A673 (cell line): ENCODE measurements at regions of chr11 and their contacts with region 1.

Region 1: GRCh38 chr11:1202776-1203504 is 19.9 kb upstream of the MUC5B start:
- DNase-seq: peak; percentile 63
- H3K4me3 ChIP-seq: no peak overlapping the region
- H3K27ac ChIP-seq: no peak overlapping the region
- H3K4me1 ChIP-seq: no peaks in the 10 kb centered on the region
- H3K27me3 ChIP-seq: peaks cover 4% of the 10 kb centered on the region
- CTCF ChIP-seq: peak; percentile 86

Region 2: DNA sequence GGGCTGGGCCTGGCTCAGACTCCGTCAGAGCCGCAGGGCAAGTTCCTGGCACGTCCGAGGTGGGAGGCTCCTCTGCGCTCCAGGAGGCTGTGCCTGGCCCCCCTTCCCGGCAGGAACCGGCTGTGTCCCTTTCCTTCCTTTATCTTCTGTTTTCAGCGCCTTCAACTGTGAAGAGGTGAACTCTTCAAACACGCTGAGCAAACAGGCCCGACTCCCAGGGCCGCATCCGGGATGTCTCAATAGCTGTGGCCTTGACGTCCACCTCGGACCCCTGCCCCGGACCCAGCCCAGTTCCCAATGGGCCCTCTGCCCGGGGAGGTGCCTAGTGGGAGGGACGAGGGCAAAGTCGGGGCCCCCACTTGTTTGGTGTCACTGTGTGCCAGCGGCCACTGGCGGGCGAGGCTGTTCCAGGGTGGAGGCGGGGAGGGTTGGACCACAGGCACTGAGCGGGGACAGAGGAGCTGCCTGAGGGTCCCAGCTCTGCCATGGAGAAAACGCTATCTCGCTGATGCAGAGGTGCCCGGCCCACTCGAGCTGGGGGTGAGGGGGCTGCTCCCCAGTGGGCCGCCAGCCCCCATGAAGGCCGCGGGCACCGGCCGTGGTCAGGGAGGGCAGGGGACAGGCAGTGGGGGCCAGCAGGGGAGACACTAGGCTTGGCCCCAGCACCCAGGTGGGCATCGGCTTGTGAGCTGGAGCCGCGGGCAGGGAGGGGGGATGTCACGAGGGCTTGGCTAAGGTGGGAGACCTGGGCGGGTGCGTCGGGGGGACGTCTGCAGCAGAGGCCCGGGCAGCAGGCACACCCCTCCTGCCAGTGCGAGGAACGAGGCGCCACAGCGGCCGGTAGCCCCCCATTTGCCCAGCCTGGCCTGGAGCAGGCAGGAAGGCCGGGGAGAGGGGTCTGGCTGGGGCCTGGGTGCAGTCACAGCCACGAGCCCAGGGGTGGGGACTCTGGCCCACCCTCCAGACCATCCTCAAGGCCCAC is 17.2 kb after region 1 on chr11:
- CTCF ChIA-PET with region 1: no interaction called
- POLR2A ChIA-PET with region 1: no interaction called
- intact Hi-C with region 1: no loop called
- DNase-seq: no peak
- H3K4me3 ChIP-seq: no peak overlapping the region
- H3K27ac ChIP-seq: no peak overlapping the region
- H3K4me1 ChIP-seq: no peaks in the 10 kb centered on the region
- H3K27me3 ChIP-seq: no peaks in the 10 kb centered on the region
- CTCF ChIP-seq: no peak

Region 3: DNA sequence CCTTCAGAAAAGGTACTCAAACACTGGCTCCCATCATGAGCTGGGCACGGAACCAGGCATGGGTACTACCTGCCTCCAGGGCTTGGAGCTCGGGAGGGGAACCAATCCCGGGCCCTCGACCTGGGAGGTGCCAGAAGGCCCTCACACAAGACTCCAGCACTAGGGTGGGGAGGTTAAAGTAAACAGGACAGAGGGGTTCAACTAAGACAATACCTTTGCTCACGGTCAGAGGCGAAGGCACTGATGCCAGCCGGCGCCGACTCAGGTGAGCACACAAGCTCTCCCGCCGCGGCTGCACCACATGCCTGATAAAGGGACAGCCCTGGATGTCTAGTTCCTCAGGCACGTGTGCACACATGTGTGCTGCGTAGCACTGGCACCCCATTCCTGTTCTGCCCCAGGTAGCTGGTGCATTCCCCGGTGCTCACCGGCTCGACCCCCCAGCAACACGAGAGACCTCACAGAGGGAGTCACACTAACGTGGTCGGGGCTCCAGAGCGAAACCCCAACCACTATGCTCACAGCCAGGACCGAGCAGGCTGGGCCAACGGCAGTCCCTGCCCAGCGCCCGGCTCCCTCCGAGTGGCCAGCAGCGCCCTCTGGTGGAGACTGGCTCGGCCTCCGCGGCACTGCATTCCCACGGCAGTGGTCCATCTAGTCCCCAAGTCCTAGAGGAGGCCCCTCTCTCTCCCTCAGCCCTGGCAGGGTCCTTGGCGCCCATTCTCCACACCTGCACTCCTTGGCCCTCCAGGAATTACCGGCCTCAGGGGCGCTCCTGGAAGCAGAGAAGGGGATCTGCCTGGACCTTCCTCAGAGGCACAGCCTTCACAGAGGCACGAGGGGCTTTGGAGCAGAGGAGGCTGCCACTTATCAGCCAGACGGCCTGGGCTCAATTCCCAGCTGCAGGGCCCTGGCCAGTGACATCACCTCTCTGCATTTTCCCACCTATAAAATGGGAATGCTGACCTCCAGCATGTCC is 312.4 kb after region 1 on chr11:
- CTCF ChIA-PET with region 1: no interaction called
- POLR2A ChIA-PET with region 1: no interaction called
- intact Hi-C with region 1: loop called (anchors 1 kb)
- DNase-seq: peak; percentile 73
- H3K4me3 ChIP-seq: no peak overlapping the region
- H3K27ac ChIP-seq: no peak overlapping the region
- H3K4me1 ChIP-seq: peaks cover 4% of the 10 kb centered on the region
- H3K27me3 ChIP-seq: no peaks in the 10 kb centered on the region
- CTCF ChIP-seq: peak; percentile 86